Body of pancreas (tissue), 4 donors: ENCODE measurements at regions of chrX and their contacts with region 1.

Region 1: GRCh38 chrX:99095965-99096635 is 1314.0 kb downstream of the PCDH19 start:
- DNase-seq: no peak
- ATAC-seq: no peak
- H3K4me3 ChIP-seq: no peak overlapping the region
- H3K27ac ChIP-seq: no peak overlapping the region
- H3K4me1 ChIP-seq: no peaks in the 10 kb centered on the region
- H3K27me3 ChIP-seq: no peaks in the 10 kb centered on the region
- CTCF ChIP-seq: no peak
- POLR2A ChIP-seq: no peak

Region 2: DNA sequence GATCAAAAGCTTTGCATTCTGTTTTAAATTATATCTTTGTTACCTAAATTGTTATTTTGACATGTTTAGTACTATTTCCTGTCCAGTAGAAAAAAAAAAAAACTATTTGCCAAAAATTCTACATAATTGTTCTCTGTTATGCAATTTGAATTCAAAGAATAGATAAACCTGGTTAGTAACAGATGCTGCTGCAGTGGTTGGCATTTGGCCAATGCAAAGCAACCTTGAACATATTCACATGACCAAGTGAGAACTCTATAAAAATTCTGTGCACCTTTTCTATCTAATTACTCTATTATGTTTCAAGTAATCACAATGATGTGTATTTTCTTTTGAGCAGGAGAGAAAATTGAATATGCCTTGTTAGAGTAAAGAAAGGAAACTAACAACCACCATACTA is 739.0 kb before region 1 on chrX:
- intact Hi-C with region 1: no loop called
- DNase-seq: no peak
- ATAC-seq: no peak
- H3K4me3 ChIP-seq: no peak overlapping the region
- H3K27ac ChIP-seq: no peak overlapping the region
- H3K4me1 ChIP-seq: no peaks in the 10 kb centered on the region
- H3K27me3 ChIP-seq: no peaks in the 10 kb centered on the region
- CTCF ChIP-seq: no peak
- POLR2A ChIP-seq: no peak

Region 3: GRCh38 chrX:98646351-98646750 is 449.7 kb before region 1 on chrX:
- intact Hi-C with region 1: no loop called
- DNase-seq: no peak
- ATAC-seq: no peak
- H3K4me3 ChIP-seq: no peak overlapping the region
- H3K27ac ChIP-seq: no peak overlapping the region
- H3K4me1 ChIP-seq: no peaks in the 10 kb centered on the region
- H3K27me3 ChIP-seq: no peaks in the 10 kb centered on the region
- CTCF ChIP-seq: no peak
- POLR2A ChIP-seq: no peak

Region 4: GRCh38 chrX:99413317-99413716 is 317.2 kb after region 1 on chrX:
- intact Hi-C with region 1: no loop called
- DNase-seq: no peak
- ATAC-seq: no peak
- H3K4me3 ChIP-seq: no peak overlapping the region
- H3K27ac ChIP-seq: no peak overlapping the region
- H3K4me1 ChIP-seq: no peaks in the 10 kb centered on the region
- H3K27me3 ChIP-seq: no peaks in the 10 kb centered on the region
- CTCF ChIP-seq: no peak
- POLR2A ChIP-seq: no peak

Region 5: DNA sequence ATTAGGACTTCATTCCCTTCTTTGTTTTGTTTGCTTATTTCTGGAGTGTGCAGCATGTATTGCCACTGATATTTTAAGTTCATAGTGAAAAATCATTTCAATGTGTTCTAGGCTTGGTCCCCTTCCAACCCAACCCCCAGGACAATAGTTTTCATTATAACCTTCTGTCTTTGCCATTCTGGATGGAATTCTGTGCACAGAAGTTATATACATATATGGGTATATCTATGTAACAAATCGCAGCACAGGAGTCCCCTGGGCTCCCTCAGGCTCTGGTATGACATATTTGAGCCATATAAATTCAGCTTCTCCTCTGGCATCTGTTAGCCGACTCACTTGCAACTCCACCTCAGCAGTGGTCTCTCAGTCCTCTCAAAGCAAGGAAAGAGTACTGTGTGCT is 1488.5 kb after region 1 on chrX and contains the start of gene TNMD:
- intact Hi-C with region 1: loop called (anchors 10 kb)
- DNase-seq: no peak
- ATAC-seq: no peak
- H3K4me3 ChIP-seq: no peak within 1 kb of the TSS
- H3K27ac ChIP-seq: no peak within 1 kb of the TSS
- H3K4me1 ChIP-seq: no peaks in the 10 kb centered on the region
- H3K27me3 ChIP-seq: no peaks in the 10 kb centered on the region
- CTCF ChIP-seq: no peak
- POLR2A ChIP-seq: no peak
- total RNA-seq, gene TNMD: 0.99 TPM in 1 of 2 donors, not detected in the other